HCT116 (cell line): ENCODE measurements at regions of chrX and their contacts with region 1.

Region 1: DNA sequence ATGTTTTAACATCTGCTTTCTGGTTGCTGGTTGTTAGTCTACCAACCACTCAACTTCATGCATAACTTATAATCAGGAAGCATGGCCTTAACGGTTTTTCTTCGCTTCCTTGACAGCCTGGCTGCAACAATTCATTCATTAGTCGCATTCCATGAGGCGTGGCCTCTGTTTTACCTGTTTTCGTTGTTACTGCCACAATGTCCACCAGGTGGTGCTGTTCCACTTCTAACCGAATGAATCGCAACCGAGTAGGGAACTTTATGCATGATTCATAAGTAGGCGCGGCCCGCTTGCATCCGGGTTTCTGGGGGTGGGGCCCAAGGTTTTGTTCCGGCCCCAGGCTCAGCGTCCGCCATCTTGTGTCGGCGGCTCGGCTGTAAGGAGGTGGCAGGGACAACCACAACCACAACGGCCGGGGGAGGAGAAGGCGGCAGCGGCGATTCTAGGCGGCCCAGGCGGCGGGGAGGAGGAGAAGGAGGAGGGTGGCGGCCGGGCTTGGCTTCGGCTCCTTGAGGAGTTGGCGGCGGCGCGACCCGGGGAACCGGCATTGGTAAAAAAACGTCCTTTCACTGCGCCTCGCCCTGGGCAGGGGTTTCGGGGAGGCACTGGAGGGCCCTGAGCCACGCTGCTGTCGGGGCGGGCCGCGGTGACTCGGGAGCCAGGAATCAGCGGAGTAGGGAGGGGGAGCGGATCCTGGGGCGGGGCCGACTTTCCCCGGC is at the start of gene UBA1:
- DNase-seq: peak; percentile 87
- ATAC-seq: peak; percentile 70
- H3K4me3 ChIP-seq: peak within 1 kb of the TSS; percentile 75 to 77
- H3K27ac ChIP-seq: peak within 1 kb of the TSS; percentile 83
- H3K4me1 ChIP-seq: peaks cover 7 to 26% of the 10 kb centered on the region in 2 experiments; a peak in 3 of 4 replicates
- H3K27me3 ChIP-seq: no peaks in the 10 kb centered on the region
- CTCF ChIP-seq: peak in 2 of 3 experiments; percentile 51 to 61; a peak in 3 of 6 replicates
- POLR2A ChIP-seq: peak; percentile 62
- RAD21 ChIP-seq: no peak
- total RNA-seq, gene UBA1: 275 TPM

Region 2: GRCh38 chrX:47361538-47362511 is 168.2 kb after region 1 on chrX:
- CTCF ChIA-PET with region 1: no interaction called
- POLR2A ChIA-PET with region 1: interaction called, 5 read pairs
- RAD21 ChIA-PET with region 1: no interaction called
- intact Hi-C with region 1: loop called (anchors 5 kb)
- DNase-seq: peak; percentile 84
- ATAC-seq: peak; percentile 97
- H3K4me3 ChIP-seq: peak overlapping the region; percentile 28 to 55
- H3K27ac ChIP-seq: peak overlapping the region; percentile 63
- H3K4me1 ChIP-seq: peaks cover 13 to 22% of the 10 kb centered on the region in 2 experiments
- H3K27me3 ChIP-seq: no peaks in the 10 kb centered on the region
- CTCF ChIP-seq: 0 out of 6 replicates have a peak, but pooled peaks of 1 of the 3 experiments have one; percentile 5
- POLR2A ChIP-seq: no peak
- RAD21 ChIP-seq: peak; percentile 44; the same call in 1 of the 2 replicates

Region 3: GRCh38 chrX:47482512-47483309 is 289.1 kb after region 1 on chrX and contains the start of gene ZNF41:
- CTCF ChIA-PET with region 1: no interaction called
- POLR2A ChIA-PET with region 1: no interaction called
- RAD21 ChIA-PET with region 1: no interaction called
- intact Hi-C with region 1: loop called (anchors 5 kb)
- DNase-seq: peak; percentile 74
- ATAC-seq: peak; percentile 95
- H3K4me3 ChIP-seq: peak within 1 kb of the TSS; percentile 60 to 68
- H3K27ac ChIP-seq: peak within 1 kb of the TSS; percentile 78
- H3K4me1 ChIP-seq: peaks cover 0 to 21% of the 10 kb centered on the region in 2 experiments; a peak in 2 of 4 replicates
- H3K27me3 ChIP-seq: no peaks in the 10 kb centered on the region
- CTCF ChIP-seq: no peak
- POLR2A ChIP-seq: no peak
- RAD21 ChIP-seq: no peak
- total RNA-seq, gene ZNF41: 7.4 TPM

Region 4: DNA sequence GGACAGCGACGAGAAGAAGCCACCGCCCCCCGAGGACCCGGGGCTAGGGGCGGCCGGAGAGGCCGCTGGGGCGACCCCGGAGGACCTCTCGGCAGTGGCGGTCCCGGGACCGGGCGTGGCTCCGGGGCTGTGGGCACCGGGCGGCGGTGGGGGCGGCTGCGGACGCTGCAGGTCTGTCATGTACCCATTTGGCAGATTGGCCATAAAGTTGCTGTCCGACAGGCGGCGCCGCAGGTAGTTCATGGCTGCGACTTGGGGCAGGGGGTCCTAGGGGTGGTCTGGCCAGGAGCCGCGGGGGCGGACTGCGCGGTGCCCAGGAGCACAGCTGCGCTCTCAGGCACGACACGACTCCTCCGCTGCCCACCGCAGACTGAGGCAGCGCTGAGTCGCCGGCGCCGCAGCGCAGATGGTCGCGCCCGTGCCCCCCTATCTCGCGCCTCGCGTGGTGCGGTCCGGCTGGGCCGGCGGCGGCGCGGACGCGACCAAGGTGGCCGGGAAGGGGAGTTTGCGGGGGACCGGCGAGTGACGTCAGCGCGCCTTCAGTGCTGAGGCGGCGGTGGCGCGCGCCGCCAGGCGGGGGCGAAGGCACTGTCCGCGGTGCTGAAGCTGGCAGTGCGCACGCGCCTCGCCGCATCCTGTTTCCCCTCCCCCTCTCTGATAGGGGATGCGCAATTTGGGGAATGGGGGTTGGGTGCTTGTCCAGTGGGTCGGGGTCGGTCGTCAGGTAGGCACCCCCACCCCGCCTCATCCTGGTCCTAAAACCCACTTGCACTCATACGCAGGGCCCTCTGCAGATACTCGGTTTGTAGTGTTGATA is 426.1 kb after region 1 on chrX and contains the start of gene SYN1:
- CTCF ChIA-PET with region 1: no interaction called
- POLR2A ChIA-PET with region 1: no interaction called
- RAD21 ChIA-PET with region 1: no interaction called
- intact Hi-C with region 1: no loop called
- DNase-seq: peak; percentile 42
- ATAC-seq: peak; percentile 90
- H3K4me3 ChIP-seq: no peak within 1 kb of the TSS
- H3K27ac ChIP-seq: no peak within 1 kb of the TSS
- H3K4me1 ChIP-seq: no peaks in the 10 kb centered on the region
- H3K27me3 ChIP-seq: no peaks in the 10 kb centered on the region
- CTCF ChIP-seq: no peak
- POLR2A ChIP-seq: no peak
- RAD21 ChIP-seq: no peak
- total RNA-seq, gene SYN1: 0.86 TPM

Region 5: DNA sequence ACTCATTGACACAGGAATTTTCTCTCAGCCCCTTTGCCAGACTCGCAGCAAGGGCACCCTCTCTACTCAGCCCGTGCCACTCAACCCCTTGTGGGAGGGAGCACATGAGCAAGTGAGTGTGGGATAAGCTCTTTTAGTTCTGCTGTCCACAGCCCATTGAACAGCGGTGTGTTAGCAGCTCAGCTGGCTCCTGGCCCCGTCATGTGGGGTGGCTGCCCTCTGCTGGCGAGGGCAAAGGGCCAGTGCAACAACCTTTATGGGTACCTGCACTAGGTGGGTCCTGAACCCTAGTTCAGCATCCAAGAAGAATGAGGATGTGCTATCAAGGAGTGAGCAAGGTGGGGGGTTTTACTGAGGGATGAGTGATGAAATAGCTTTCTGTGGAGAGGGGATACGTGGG is 558.0 kb after region 1 on chrX:
- CTCF ChIA-PET with region 1: no interaction called
- POLR2A ChIA-PET with region 1: no interaction called
- RAD21 ChIA-PET with region 1: no interaction called
- intact Hi-C with region 1: loop called (anchors 10 kb)
- DNase-seq: peak; percentile 13
- ATAC-seq: peak; percentile 80
- H3K4me3 ChIP-seq: no peak overlapping the region
- H3K27ac ChIP-seq: no peak overlapping the region
- H3K4me1 ChIP-seq: no peaks in the 10 kb centered on the region
- H3K27me3 ChIP-seq: no peaks in the 10 kb centered on the region
- CTCF ChIP-seq: peak; percentile 39 to 58 (median 55); a peak in 5 of 6 replicates
- POLR2A ChIP-seq: no peak
- RAD21 ChIP-seq: peak; percentile 74